ENCODE measurements at regions of chr11 and their contacts with region 1.

Region 1: GRCh38 chr11:86999859-87000753 is 37.6 kb upstream of the TMEM135 start:
- DNase-seq: peak; percentile 49
- H3K4me3 ChIP-seq: no peak overlapping the region
- H3K27ac ChIP-seq: peak overlapping the region; percentile 29
- H3K4me1 ChIP-seq: peaks cover 20% of the 10 kb centered on the region
- H3K27me3 ChIP-seq: no peaks in the 10 kb centered on the region
- CTCF ChIP-seq: no peak

Region 2: GRCh38 chr11:86983021-86983488 is 17.1 kb before region 1 on chr11:
- CTCF ChIA-PET with region 1: interaction called, 13 read pairs
- POLR2A ChIA-PET with region 1: no interaction called
- intact Hi-C with region 1: no loop called
- DNase-seq: no peak
- H3K4me3 ChIP-seq: no peak overlapping the region
- H3K27ac ChIP-seq: no peak overlapping the region
- H3K4me1 ChIP-seq: peaks cover 35% of the 10 kb centered on the region
- H3K27me3 ChIP-seq: no peaks in the 10 kb centered on the region
- CTCF ChIP-seq: no peak

Region 3: DNA sequence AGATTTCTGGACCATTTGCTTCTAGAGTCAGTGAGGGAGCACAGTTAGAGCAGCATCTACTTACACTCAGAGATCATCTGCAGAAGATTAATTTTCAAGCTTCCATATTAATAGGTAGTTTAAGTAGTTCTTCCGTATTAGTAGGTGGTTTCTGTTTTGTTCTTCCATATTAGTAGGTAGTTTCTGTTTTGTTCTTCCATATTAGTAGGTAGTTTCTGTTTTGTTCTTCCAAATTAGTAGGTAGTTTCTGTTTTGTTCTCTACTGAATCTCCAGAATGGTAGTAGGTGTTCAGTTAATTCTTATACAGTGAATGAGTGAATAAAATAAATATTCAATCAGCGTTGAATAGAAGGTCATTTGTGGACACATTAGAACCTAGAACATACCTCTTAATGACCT is 213.3 kb after region 1 on chr11:
- CTCF ChIA-PET with region 1: no interaction called
- POLR2A ChIA-PET with region 1: interaction called, 11 read pairs
- intact Hi-C with region 1: no loop called
- DNase-seq: no peak
- H3K4me3 ChIP-seq: no peak overlapping the region
- H3K27ac ChIP-seq: no peak overlapping the region
- H3K4me1 ChIP-seq: peaks cover 10% of the 10 kb centered on the region
- H3K27me3 ChIP-seq: no peaks in the 10 kb centered on the region
- CTCF ChIP-seq: no peak